ENCODE measurements at regions of chr7 and their contacts with region 1.

Region 1: DNA sequence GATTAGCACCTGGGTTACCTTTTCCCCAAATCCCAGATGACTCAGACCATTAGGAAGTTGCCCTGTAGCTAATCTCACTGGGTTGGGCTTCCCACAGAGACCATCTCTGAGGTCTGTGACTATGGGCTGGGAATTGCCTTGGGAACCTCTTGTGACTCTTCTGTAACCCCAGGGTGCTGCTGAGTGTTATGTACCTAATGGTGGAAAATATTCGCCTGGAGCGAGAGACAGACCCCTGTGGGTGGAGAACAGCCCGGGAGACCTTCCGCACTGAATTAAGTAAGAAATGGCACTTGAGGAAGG is 20.0 kb downstream of the STRIP2 start:
- DNase-seq: no peak
- H3K4me3 ChIP-seq: no peak overlapping the region
- H3K4me3 Mint-ChIP-seq: no peak overlapping the region
- H3K27ac Mint-ChIP-seq: no peak overlapping the region
- H3K4me1 ChIP-seq: 0 out of 2 replicates have a peak, but pooled peaks cover 6% of the 10 kb centered on the region
- H3K4me1 Mint-ChIP-seq: no peaks in the 10 kb centered on the region
- H3K27me3 ChIP-seq: no peaks in the 10 kb centered on the region
- H3K27me3 Mint-ChIP-seq: no peaks in the 10 kb centered on the region
- CTCF ChIP-seq: no peak

Region 2: GRCh38 chr7:129332284-129333035 is 121.7 kb before region 1 on chr7:
- CTCF ChIA-PET with region 1: no interaction called
- POLR2A ChIA-PET with region 1: no interaction called
- intact Hi-C with region 1: no loop called
- DNase-seq: no peak
- H3K4me3 ChIP-seq: no peak overlapping the region
- H3K4me3 Mint-ChIP-seq: no peak overlapping the region
- H3K27ac Mint-ChIP-seq: no peak overlapping the region
- H3K4me1 ChIP-seq: peaks cover 16% of the 10 kb centered on the region
- H3K4me1 Mint-ChIP-seq: peaks cover 4% of the 10 kb centered on the region
- H3K27me3 ChIP-seq: no peaks in the 10 kb centered on the region
- H3K27me3 Mint-ChIP-seq: no peaks in the 10 kb centered on the region
- CTCF ChIP-seq: no peak

Region 3: GRCh38 chr7:129433847-129434674 is 20.1 kb before region 1 on chr7 and contains the start of gene STRIP2:
- CTCF ChIA-PET with region 1: no interaction called
- POLR2A ChIA-PET with region 1: no interaction called
- intact Hi-C with region 1: loop called (anchors 1 kb)
- DNase-seq: peak; percentile 92 to 96
- H3K4me3 ChIP-seq: peak within 1 kb of the TSS; percentile 87
- H3K4me3 Mint-ChIP-seq: peak within 1 kb of the TSS; percentile 99
- H3K27ac Mint-ChIP-seq: peak within 1 kb of the TSS; percentile 87
- H3K4me1 ChIP-seq: no peaks in the 10 kb centered on the region; the same call in 1 of the 2 replicates
- H3K4me1 Mint-ChIP-seq: peaks cover 8% of the 10 kb centered on the region
- H3K27me3 ChIP-seq: no peaks in the 10 kb centered on the region
- H3K27me3 Mint-ChIP-seq: peaks cover 7% of the 10 kb centered on the region
- CTCF ChIP-seq: peak in 1 of 2 experiments; percentile 39
- total RNA-seq, gene STRIP2: 5.8 and 6.5 TPM in 2 replicates

Region 4: GRCh38 chr7:129489491-129489890 is 35.3 kb after region 1 on chr7:
- CTCF ChIA-PET with region 1: interaction called, 12 read pairs
- POLR2A ChIA-PET with region 1: no interaction called
- intact Hi-C with region 1: no loop called
- DNase-seq: no peak
- H3K4me3 ChIP-seq: no peak overlapping the region
- H3K4me3 Mint-ChIP-seq: no peak overlapping the region
- H3K27ac Mint-ChIP-seq: no peak overlapping the region
- H3K4me1 ChIP-seq: no peaks in the 10 kb centered on the region
- H3K4me1 Mint-ChIP-seq: no peaks in the 10 kb centered on the region
- H3K27me3 ChIP-seq: no peaks in the 10 kb centered on the region
- H3K27me3 Mint-ChIP-seq: no peaks in the 10 kb centered on the region
- CTCF ChIP-seq: no peak

Measured in Caco-2 (cell line).